Psoas muscle (tissue), 8 donors: ENCODE measurements at regions of chr1 and their contacts with region 1.

Region 1: DNA sequence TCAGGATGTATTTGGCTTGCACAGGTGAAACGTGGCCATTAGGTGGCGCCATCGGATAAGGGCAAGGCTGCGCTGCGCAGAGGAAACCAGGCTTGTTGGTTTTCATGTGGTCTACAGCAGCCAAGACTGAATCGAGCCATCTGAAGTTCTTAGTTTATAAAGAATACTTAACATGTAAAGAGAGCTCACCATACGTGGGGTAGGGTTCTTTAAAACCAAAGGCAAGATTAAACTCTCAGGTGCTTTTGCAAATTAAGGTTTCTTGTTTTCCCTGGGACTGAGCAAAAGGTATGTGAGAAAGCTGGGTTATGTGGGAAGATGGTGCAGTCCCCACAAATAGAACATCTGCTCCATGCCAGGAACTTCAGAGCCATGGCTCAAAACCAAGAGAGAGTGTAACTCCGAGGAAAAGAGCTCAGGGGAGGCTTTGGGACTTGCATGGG is 9.3 kb downstream of the MASP2 start:
- DNase-seq: peak; percentile 86 to 93
- ATAC-seq: peak; percentile 93 to 97 (median 95)
- H3K4me3 ChIP-seq: peak overlapping the region; percentile 40
- H3K27ac ChIP-seq: peak overlapping the region; percentile 61
- H3K4me1 ChIP-seq: peaks cover 8% of the 10 kb centered on the region
- H3K27me3 ChIP-seq: peaks cover 0 to 2% (median 0%) of the 10 kb centered on the region in 3 donors
- CTCF ChIP-seq: peak; percentile 98

Region 2: DNA sequence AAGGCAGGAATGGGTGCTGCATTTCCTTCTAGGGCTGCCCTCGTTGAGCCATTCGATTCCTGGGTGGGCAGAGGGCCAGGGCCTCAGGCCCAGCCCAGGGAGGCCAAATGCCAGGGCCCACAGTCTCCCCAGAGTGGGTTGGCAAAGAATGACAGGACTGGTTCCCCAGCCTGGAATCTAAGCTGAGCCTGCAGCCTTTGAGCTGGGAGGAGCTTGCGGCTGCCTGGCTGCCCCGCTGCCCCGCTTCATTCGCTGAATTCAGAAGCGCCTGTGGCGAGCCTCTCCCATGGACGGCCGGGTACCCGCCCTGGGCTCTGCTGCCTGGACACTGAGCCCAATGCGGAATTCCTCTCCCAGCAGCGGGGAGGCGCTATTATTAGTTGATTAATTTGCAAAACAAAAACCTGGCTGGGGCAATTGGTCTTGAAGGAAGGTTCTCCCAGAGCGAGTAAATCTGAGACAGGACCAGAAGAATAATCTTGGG is 57.6 kb before region 1 on chr1:
- intact Hi-C with region 1: no loop called
- DNase-seq: peak; percentile 79 to 91
- ATAC-seq: peak; percentile 83 to 87 (median 86)
- H3K4me3 ChIP-seq: peak overlapping the region; percentile 55
- H3K27ac ChIP-seq: peak overlapping the region; percentile 77
- H3K4me1 ChIP-seq: peaks cover 36% of the 10 kb centered on the region
- H3K27me3 ChIP-seq: no peaks in the 10 kb centered on the region
- CTCF ChIP-seq: peak; percentile 47

Region 3: DNA sequence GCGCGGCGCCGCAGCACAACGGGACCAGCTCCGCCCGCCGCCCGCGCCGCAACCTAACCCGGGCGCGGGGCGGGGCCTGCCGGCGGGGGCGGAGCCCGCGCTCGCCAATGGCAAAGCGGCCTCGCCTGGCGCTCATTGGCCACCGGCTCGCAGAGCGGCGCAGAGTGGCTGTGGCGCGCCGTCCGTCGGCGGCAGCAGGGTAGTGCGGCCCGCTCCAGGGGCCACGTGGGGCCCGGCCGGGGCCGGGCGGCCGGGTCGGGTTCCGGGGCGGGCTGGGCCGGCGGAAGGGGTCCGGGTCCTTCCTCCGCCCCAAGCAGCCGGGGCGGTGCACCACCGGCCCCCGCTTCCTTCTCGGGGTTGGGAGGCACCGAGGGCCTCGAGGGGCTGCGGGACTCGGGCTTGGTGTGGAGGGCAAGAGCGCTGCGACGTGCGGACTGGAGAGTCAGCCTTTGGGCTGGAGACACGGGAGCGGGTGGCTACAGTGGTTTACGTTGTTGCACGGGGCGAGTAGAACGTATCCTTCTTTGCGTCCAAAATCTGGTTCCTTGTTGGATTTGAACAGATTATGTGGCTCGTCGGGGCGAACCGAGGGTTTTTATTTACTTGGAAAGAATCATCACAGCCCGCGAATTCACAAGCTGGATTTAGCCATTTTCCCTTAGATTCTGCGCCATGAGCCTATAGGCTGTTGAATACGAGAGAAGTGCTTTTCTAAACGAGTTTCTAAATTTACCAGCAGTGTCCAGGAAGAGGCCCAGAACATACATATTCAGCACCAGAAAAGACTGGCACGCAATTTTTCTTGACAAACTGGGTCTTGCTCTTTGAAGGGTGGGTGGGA is 22.4 kb after region 1 on chr1 and contains the start of gene SRM:
- intact Hi-C with region 1: loop called in 1 of 2 experiments (anchors 1 kb)
- DNase-seq: peak; percentile 93 to 96
- ATAC-seq: peak; percentile 98 to 100 (median 99)
- H3K4me3 ChIP-seq: peak within 1 kb of the TSS; percentile 98
- H3K27ac ChIP-seq: peak within 1 kb of the TSS; percentile 88
- H3K4me1 ChIP-seq: peaks cover 17% of the 10 kb centered on the region
- H3K27me3 ChIP-seq: no peaks in the 10 kb centered on the region
- CTCF ChIP-seq: peak; percentile 69
- total RNA-seq, gene SRM: 60.4 to 106 (median 74.9) TPM

Region 4: GRCh38 chr1:12113433-12114339 is 1075.9 kb after region 1 on chr1:
- intact Hi-C with region 1: no loop called
- DNase-seq: no peak
- ATAC-seq: no peak
- H3K4me3 ChIP-seq: no peak overlapping the region
- H3K27ac ChIP-seq: no peak overlapping the region
- H3K4me1 ChIP-seq: no peaks in the 10 kb centered on the region
- H3K27me3 ChIP-seq: no peaks in the 10 kb centered on the region
- CTCF ChIP-seq: no peak